ENCODE measurements at regions of chr3 and their contacts with region 1.

Region 1: DNA sequence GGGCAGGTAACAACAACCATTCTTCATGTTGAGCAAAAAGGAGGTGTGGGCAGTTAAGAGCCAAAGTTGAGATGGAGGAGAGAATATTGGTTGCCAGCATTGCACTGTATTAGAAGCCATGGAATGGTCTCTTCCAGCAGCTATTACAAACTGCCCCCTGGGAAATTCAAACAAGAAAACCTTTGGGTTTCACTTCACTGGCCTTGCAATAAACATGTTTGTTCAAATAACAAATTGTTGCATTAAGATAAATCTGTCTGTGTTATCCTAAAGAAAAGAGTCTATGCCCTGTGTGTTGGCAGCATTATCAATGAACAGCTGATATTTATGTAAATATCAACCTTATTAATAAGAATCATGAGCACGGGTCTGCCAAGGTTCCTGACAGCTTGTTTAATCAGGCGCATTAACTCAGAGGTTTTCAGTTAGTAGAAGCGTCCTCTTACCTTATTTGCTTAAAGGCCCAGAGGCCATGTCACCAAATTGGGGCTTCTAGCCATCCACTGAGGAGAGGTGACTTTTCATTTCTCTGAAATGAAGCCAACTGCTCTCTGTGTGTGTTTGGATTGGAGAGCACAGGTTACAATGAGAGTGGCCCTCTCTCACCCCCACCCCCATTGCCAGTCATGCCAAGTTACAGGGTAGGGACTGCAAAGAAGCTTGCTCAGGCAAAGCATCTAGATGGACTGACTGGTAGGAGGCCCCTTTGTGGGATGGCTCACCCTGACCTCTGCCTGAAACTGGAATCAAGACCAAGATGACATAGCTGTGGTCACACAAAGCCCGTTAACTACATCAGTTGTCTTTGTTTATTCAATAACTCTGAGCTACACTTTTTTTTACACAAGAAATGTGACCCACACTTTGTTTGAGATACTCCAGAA is 10.5 kb downstream of the FILIP1L start:
- DNase-seq: no peak
- H3K4me3 Mint-ChIP-seq: no peak overlapping the region
- H3K27ac Mint-ChIP-seq: no peak overlapping the region
- H3K4me1 Mint-ChIP-seq: peaks cover 38% of the 10 kb centered on the region
- H3K27me3 Mint-ChIP-seq: no peaks in the 10 kb centered on the region

Region 2: DNA sequence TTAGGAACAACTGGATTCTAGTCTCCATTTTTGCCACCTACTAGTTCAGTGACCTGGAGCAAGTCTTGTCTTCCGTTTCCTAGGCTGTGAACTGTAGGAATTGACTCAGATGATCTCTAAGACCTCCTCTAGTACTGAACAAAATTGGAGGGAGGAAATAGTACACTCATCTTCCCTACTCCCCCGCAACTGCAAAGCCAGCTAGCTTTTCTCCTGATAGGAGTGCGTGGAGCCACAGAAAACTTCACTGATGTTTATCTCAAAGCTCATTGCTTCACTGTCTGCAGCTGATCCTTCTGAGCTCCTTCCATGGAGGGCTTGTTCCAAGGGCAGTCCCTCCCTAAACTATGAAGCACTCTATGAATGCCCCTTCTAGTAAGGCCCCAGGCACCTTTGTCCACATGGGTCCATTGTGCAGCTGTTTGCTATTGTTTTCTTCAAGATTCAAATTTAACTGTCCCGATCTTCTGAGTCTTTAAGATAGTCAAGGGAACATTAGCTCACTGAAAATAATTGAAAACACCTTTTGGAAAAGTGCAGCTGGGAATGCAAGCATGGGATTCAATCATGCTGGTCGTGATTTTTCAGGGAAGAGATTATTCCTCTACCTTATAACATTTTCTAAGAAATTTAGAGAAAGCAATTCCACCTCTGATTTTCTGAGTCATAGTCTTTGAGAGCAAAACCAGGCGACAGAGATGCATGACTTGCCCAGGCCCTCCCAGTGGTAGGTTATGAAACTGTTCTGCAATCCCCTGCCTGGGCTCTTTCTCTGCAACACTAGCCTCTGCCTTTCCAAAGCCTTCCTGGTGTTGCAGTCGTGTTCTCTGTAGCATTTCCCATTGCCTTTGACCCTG is 13.8 kb before region 1 on chr3:
- CTCF ChIA-PET with region 1: interaction called, 24 read pairs
- POLR2A ChIA-PET with region 1: interaction called, 3 read pairs
- DNase-seq: peak; percentile 51
- H3K4me3 Mint-ChIP-seq: no peak overlapping the region
- H3K27ac Mint-ChIP-seq: no peak overlapping the region
- H3K4me1 Mint-ChIP-seq: peaks cover 40% of the 10 kb centered on the region
- H3K27me3 Mint-ChIP-seq: peaks cover 4% of the 10 kb centered on the region

Measured in activated CD4-positive, alpha-beta memory T cell treated with anti-CD3 and anti-CD28 coated beads, Interleukin-2, amount 10 ng/mL, durations not matched to agents 7 days and 5 days (primary cell).